Activated CD8-positive, alpha-beta T cell treated with anti-CD3 and anti-CD28 coated beads for 36 hours (primary cell): ENCODE measurements at regions of chr3 and their contacts with region 1.

Region 1: GRCh38 chr3:87179642-87180041 is 47.5 kb upstream of the CHMP2B start:
- DNase-seq: no peak
- ATAC-seq: no peak
- H3K4me3 Mint-ChIP-seq: no peak overlapping the region
- H3K27ac Mint-ChIP-seq: no peak overlapping the region
- H3K4me1 Mint-ChIP-seq: no peaks in the 10 kb centered on the region
- H3K27me3 Mint-ChIP-seq: peaks cover 3% of the 10 kb centered on the region
- CTCF ChIP-seq: no peak

Region 2: DNA sequence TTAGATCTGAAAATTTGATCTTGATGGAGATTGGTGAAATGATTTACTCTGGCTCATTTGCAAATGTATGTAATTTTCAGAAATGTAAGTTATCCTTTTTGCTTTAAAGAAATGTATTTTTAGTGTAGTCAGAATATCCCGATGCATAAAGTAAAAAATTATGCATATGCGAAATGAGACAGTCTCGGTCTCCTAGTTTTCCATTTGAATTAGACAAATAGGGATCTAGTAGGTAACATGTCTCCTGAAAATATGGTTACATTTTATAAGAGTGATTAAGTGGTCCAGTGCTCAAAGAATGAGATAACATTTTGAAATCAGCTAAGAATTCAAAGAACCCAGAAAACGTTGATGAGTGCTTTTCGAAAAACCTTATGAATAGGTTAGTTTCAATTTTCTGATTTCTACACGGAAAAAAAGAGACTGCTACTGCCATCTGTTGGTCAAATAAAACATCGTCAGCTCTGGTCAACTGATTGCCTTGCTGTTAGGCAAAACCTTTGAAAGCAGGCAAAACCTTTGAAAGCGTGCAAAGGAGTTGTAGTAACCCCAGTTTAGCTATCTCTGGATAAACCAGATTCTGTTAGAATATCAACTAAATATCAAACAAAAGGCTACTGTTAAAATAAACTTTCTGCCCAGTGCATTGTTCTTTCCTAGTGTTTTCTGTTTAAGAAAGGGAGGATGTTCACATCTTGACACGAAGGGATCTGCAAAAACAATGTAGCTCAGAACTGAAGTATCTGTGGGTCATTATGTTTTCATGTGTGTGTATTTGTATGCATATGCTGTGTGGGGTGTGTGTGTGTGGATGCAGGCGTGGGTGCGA is 11.8 kb before region 1 on chr3:
- CTCF ChIA-PET with region 1: interaction called, 34 read pairs
- POLR2A ChIA-PET with region 1: no interaction called
- intact Hi-C with region 1: no loop called
- DNase-seq: peak; percentile 43
- ATAC-seq: peak; percentile 61
- H3K4me3 Mint-ChIP-seq: no peak overlapping the region
- H3K27ac Mint-ChIP-seq: no peak overlapping the region
- H3K4me1 Mint-ChIP-seq: peaks cover 3% of the 10 kb centered on the region
- H3K27me3 Mint-ChIP-seq: peaks cover 7% of the 10 kb centered on the region
- CTCF ChIP-seq: peak; percentile 63

Region 3: GRCh38 chr3:87270908-87271700 is 91.5 kb after region 1 on chr3:
- CTCF ChIA-PET with region 1: no interaction called
- POLR2A ChIA-PET with region 1: no interaction called
- intact Hi-C with region 1: no loop called
- DNase-seq: peak; percentile 9
- ATAC-seq: peak; percentile 82
- H3K4me3 Mint-ChIP-seq: no peak overlapping the region
- H3K27ac Mint-ChIP-seq: peak overlapping the region; percentile 3
- H3K4me1 Mint-ChIP-seq: peaks cover 29% of the 10 kb centered on the region
- H3K27me3 Mint-ChIP-seq: peaks cover 3% of the 10 kb centered on the region
- CTCF ChIP-seq: no peak